Sigmoid colon (tissue), 7 donors: ENCODE measurements at regions of chr6 and their contacts with region 1.

Region 1: GRCh38 chr6:138773177-138774091 is at the start of gene CCDC28A:
- DNase-seq: peak; percentile 97
- H3K4me3 ChIP-seq: peak within 1 kb of the TSS; percentile 77 to 83 (median 80)
- H3K27ac ChIP-seq: peak within 1 kb of the TSS; percentile 90 to 95 (median 92)
- H3K4me1 ChIP-seq: peaks cover 0 to 23% (median 19%) of the 10 kb centered on the region in 4 donors
- H3K27me3 ChIP-seq: no peaks in the 10 kb centered on the region
- CTCF ChIP-seq: no peak
- EP300 ChIP-seq: no peak
- POLR2A ChIP-seq: peak; percentile 39 to 63
- total RNA-seq, gene CCDC28A: 17.4 to 33.1 (median 21.7) TPM

Region 2: GRCh38 chr6:137692806-137693205 is 1080.6 kb before region 1 on chr6:
- intact Hi-C with region 1: no loop called
- DNase-seq: no peak
- H3K4me3 ChIP-seq: no peak overlapping the region
- H3K27ac ChIP-seq: no peak overlapping the region
- H3K4me1 ChIP-seq: peaks cover 0 to 28% (median 18%) of the 10 kb centered on the region in 4 donors
- H3K27me3 ChIP-seq: no peaks in the 10 kb centered on the region
- CTCF ChIP-seq: no peak
- EP300 ChIP-seq: no peak
- POLR2A ChIP-seq: no peak

Region 3: GRCh38 chr6:138109042-138109997 is 664.1 kb before region 1 on chr6:
- intact Hi-C with region 1: loop called (anchors 5 kb)
- DNase-seq: peak; percentile 80
- H3K4me3 ChIP-seq: no peak overlapping the region
- H3K27ac ChIP-seq: peak overlapping the region; percentile 82 to 92 (median 88)
- H3K4me1 ChIP-seq: peaks cover 0 to 31% (median 24%) of the 10 kb centered on the region in 4 donors
- H3K27me3 ChIP-seq: no peaks in the 10 kb centered on the region
- CTCF ChIP-seq: peak; percentile 90 to 97 (median 94)
- EP300 ChIP-seq: no peak
- POLR2A ChIP-seq: no peak

Region 4: DNA sequence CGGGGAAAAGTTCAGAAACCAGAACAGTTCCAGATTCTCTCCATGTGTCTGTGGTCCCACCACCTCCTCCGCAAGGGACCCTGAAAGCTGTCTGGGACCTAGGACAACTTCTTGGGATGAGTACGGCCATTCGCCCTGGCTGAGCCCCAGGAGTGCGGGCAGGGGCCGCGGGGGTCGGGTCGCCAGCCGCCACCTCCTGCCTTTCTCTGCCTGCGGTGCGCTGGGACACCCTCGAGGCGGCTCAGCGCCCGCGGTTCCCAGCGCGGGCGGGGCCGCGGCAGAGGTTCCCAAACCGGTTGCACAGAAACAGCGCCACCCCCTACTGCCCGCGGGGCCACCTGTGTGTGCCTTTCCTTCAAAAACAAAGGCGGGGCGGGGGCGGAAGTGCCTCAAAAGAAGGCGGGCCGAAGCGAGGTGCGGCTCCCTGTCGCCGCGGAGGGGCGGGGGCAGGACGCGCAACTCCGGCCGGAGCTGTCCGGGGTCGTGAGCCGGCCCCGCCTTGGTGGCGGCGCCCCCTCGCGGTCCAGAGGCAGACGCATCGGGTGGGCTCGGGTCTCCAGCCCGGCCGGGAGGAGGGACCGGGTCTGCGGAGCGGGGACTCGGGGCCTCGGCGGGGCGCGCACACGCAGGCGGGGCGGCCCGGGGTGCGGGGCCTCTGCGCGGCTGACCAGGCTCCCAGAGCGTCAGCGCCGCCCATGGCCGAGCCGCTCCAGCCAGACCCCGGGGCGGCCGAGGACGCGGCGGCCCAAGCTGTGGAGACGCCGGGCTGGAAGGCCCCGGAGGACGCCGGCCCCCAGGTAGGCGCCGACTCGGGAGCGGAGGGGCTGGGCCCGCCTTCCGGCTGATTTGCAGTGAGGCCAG is 369.4 kb before region 1 on chr6 and contains the start of gene HEBP2:
- intact Hi-C with region 1: loop called (anchors 5 kb)
- DNase-seq: peak; percentile 96
- H3K4me3 ChIP-seq: peak within 1 kb of the TSS; percentile 66 to 95 (median 76)
- H3K27ac ChIP-seq: peak within 1 kb of the TSS; percentile 90 to 94 (median 92)
- H3K4me1 ChIP-seq: peaks cover 0 to 15% (median 11%) of the 10 kb centered on the region in 4 donors
- H3K27me3 ChIP-seq: no peaks in the 10 kb centered on the region
- CTCF ChIP-seq: peak in 1 of 4 experiments; percentile 44
- EP300 ChIP-seq: no peak
- POLR2A ChIP-seq: peak; percentile 35 to 63
- total RNA-seq, gene HEBP2: 46.3 to 75.3 (median 65.5) TPM

Region 5: DNA sequence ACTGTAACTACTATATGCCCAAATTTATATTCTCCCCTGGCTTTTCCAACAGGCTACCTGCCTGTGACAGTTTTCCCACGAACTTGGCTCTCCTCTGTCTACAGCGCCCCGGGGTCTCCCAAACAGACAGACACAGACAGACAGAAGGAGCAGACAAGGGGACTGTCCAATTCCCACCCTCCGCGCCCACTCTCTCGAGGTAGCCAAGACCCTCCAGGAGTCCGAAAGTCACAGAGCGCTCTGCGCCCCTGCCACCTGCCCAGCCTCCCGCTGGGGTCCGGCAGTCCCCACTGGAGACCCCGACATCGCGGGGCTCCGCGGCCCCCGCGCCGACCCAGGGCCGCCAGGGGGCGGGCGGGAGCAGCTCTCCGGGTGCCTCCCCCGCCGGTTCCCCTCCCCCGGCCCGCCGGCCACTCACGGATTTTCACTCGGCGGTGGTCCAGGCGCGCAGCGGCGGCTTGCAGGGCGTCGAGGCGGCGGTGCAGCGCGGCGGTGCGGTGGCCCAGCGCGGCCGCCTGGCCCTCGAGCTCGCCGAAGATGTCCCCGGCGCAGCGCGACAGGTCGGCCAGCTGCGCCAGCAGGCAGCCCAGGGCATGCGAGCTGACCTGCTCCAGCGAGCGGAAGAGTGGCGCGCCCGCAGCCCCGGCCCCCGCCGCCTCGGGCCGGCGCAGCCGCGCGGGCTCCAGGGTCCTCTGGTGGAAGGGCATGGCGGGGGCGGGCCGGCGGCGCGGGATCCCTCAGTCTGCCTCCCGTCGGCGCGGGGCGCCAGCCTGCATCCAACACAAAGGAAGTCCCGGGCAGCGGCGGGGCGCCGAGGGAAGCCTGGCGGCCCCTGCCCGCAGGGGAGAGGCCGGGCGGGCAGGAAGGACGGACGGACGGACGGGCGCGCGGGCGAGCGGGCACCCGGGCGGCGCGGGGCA is 81.1 kb before region 1 on chr6:
- intact Hi-C with region 1: loop called (anchors 2 kb)
- DNase-seq: peak; percentile 85
- H3K4me3 ChIP-seq: peak overlapping the region; percentile 48 to 88 (median 68)
- H3K27ac ChIP-seq: peak overlapping the region; percentile 69 to 74 (median 70)
- H3K4me1 ChIP-seq: peaks cover 0 to 14% (median 7%) of the 10 kb centered on the region in 4 donors
- H3K27me3 ChIP-seq: no peaks in the 10 kb centered on the region
- CTCF ChIP-seq: peak; percentile 31 to 82 (median 50)
- EP300 ChIP-seq: no peak
- POLR2A ChIP-seq: no peak

Region 6: DNA sequence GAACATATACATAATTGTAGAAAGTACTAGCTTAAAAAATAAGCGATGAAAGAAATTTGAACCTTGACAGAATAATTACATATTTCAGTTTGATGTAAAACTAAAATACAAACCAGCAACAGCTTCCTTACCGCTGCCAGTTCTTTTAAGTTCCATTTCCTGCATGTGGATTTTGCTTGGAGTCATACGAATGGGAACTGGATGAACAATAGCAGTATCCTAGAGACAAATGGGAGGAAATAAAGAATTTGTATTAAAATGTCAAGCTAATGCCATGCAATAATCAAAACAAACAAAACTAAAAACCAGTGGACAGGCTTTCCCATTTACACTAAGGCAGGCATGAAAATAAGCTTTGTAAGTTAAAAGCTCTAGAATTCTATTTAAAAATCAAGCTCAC is 147.5 kb after region 1 on chr6:
- intact Hi-C with region 1: no loop called
- DNase-seq: no peak
- H3K4me3 ChIP-seq: no peak overlapping the region
- H3K27ac ChIP-seq: no peak overlapping the region
- H3K4me1 ChIP-seq: no peaks in the 10 kb centered on the region
- H3K27me3 ChIP-seq: no peaks in the 10 kb centered on the region
- CTCF ChIP-seq: no peak
- EP300 ChIP-seq: no peak
- POLR2A ChIP-seq: no peak

Region 7: DNA sequence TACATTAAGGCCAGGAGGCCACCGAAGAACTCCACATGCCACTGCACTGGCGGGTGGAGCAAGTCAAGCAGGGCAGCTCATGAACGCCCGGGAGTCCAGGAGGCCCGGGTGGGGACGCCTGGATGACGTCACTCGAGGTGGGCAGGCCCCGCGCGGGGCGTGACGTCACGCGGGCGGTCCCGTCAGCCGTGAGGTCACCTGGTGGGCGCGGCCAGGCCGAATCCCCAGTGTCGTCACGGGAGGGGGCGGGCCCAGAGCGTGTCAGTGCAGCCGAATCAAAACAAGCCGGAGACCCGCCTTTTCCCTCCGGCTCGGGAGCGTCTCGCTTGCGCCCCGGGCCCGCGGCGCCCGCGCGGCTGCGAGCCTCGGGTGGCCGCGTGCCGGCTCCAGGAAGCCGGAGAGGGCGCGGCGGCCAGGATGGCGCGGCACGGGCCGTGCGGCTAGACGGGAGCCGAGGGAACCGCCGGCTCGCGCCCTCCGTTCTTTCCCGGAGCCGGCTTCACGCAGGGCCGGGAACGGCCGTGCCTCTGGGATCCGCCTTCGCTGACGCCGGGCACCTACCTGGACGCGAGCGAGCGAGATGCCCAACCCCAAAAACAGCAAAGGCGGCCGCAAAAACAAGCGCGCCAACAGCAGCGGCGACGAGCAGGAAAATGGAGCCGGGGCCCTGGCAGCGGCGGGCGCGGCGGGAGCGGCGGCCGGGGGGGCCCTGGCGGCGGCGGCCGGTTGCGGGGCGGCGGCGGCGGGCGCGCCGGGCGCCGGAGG is 361.6 kb after region 1 on chr6 and contains the start of gene HECA:
- intact Hi-C with region 1: loop called (anchors 5 kb)
- DNase-seq: peak; percentile 99
- H3K4me3 ChIP-seq: peak within 1 kb of the TSS; percentile 78 to 98 (median 94)
- H3K27ac ChIP-seq: peak within 1 kb of the TSS; percentile 89 to 98 (median 96)
- H3K4me1 ChIP-seq: peaks cover 0 to 42% (median 32%) of the 10 kb centered on the region in 4 donors
- H3K27me3 ChIP-seq: no peaks in the 10 kb centered on the region
- CTCF ChIP-seq: no peak
- EP300 ChIP-seq: no peak
- POLR2A ChIP-seq: peak in 1 of 2 donors; percentile 14
- total RNA-seq, gene HECA: 33.5 to 42.1 (median 35.6) TPM